Activated CD8-positive, alpha-beta memory T cell treated with anti-CD3 and anti-CD28 coated beads, Interleukin-2, amount 10 ng/mL, durations not matched to agents 7 days and 5 days (primary cell): ENCODE measurements at regions of chr11 and their contacts with region 1.

Region 1: DNA sequence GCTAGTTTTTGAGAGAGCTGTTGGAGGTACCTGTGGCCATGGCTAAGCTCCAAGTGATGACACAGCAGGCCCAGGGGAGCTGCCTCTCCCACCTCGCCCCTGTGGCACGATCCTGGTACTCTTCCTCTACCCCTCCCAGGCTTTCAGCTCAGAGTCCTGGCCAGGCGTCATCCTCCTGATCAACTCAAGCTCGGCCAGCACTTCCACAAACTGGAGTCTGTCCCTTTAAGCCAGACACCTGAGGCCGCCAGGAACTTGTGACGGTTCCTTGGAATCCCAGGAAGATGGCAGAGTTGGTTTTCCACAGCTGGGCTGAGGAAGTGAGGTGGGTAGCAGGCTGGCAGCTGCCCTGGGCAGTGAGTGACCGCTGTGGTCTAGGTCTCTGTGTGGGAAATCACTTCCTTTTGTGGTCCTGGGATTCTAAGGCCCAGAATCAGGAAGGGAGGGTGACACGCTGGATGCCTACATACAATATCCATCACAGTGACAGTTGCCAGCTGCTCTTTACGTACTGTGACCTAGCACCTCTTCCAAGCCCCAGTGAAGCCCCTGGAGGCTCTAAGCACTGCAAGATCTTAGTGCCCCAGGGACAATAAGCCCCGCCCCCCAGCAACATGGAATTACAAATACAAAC is 3.2 kb upstream of the CST6 start:
- DNase-seq: no peak
- ATAC-seq: no peak
- H3K4me3 Mint-ChIP-seq: no peak overlapping the region
- H3K27ac Mint-ChIP-seq: no peak overlapping the region
- H3K4me1 Mint-ChIP-seq: peaks cover 10% of the 10 kb centered on the region
- H3K27me3 Mint-ChIP-seq: peaks cover 31% of the 10 kb centered on the region

Region 2: GRCh38 chr11:65973439-65974110 is 35.0 kb before region 1 on chr11:
- CTCF ChIA-PET with region 1: no interaction called
- DNase-seq: no peak
- ATAC-seq: no peak
- H3K4me3 Mint-ChIP-seq: no peak overlapping the region
- H3K27ac Mint-ChIP-seq: no peak overlapping the region
- H3K4me1 Mint-ChIP-seq: peaks cover 3% of the 10 kb centered on the region
- H3K27me3 Mint-ChIP-seq: no peaks in the 10 kb centered on the region

Region 3: DNA sequence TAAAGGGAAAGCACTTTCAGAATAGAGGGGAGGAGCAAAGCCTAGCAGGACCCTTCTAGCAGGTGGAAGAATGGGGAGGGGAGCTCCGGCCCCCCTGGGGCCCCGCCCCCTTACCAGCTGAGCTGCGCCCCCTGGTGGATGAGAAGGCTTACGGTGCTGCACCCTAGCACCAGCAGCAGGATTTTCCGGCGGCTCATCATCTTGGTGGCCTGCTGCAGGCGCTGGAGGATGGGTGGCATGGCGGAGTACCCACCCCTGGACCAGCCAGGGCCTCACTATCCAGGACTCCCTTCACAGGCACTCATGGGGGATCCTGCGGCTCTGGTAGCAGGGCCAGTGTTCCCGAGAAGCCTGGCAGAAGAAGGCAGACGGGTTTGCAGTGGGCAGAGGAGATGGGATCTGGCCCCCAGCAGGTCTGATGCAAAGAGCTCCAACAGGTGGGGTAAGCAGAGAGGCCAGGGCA is 36.6 kb after region 1 on chr11:
- CTCF ChIA-PET with region 1: interaction called, 13 read pairs
- DNase-seq: peak; percentile 86
- ATAC-seq: peak; percentile 96
- H3K4me3 Mint-ChIP-seq: no peak overlapping the region
- H3K27ac Mint-ChIP-seq: no peak overlapping the region
- H3K4me1 Mint-ChIP-seq: peaks cover 17% of the 10 kb centered on the region
- H3K27me3 Mint-ChIP-seq: peaks cover 2% of the 10 kb centered on the region